Caco-2 (cell line): ENCODE measurements at regions of chr1 and their contacts with region 1.

Region 1: GRCh38 chr1:2194898-2195673 is 514 bp upstream of the FAAP20 start:
- DNase-seq: peak; percentile 87 to 91
- H3K4me3 ChIP-seq: peak overlapping the region; percentile 54
- H3K4me3 Mint-ChIP-seq: peak overlapping the region; percentile 73
- H3K27ac Mint-ChIP-seq: no peak overlapping the region
- H3K4me1 ChIP-seq: peaks cover 15% of the 10 kb centered on the region
- H3K4me1 Mint-ChIP-seq: no peaks in the 10 kb centered on the region
- H3K27me3 ChIP-seq: no peaks in the 10 kb centered on the region
- H3K27me3 Mint-ChIP-seq: no peaks in the 10 kb centered on the region
- CTCF ChIP-seq: peak; percentile 70 to 83

Region 2: GRCh38 chr1:2163205-2163604 is 31.9 kb before region 1 on chr1:
- CTCF ChIA-PET with region 1: no interaction called
- POLR2A ChIA-PET with region 1: no interaction called
- intact Hi-C with region 1: no loop called
- DNase-seq: no peak
- H3K4me3 ChIP-seq: no peak overlapping the region
- H3K4me3 Mint-ChIP-seq: no peak overlapping the region
- H3K27ac Mint-ChIP-seq: no peak overlapping the region
- H3K4me1 ChIP-seq: no peaks in the 10 kb centered on the region
- H3K4me1 Mint-ChIP-seq: no peaks in the 10 kb centered on the region
- H3K27me3 ChIP-seq: no peaks in the 10 kb centered on the region
- H3K27me3 Mint-ChIP-seq: no peaks in the 10 kb centered on the region
- CTCF ChIP-seq: no peak

Region 3: DNA sequence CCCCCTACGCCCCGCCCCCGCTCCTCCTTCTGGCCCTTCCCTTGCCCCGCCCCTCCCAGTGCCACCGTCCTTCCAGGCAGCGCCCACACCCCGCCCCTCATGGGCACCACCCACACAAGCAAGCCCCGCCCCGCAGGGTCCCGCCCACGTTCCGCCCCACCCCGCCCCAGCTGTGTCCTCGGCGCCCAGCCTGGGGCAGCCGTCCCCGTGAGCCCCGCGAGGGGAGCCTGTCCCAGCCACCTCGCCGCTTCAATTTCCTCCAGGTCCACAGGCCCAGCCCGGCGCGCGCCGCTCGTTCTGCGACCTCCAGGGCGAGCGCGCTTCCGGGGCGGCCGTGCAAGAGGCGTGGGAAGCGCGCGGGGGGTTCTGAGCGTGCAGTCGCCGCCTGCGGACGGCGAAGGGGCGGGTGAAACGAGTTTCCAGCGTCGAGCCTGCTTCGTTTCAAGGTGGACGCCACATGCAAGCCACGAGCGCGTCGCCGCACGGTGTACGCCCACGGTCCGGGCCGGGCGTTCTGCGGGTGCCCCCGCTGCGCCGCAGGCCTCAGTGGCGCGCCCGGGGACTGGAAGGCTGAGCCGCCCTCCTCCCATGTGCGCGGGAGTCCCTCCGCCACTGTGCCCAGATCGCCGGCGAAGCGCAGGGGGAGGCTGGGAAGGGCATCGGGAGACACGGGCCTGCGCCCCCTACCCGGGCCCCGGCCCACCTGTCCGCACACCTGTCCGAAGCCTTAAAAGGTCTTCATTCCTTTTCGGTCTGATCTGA is 10.3 kb after region 1 on chr1:
- CTCF ChIA-PET with region 1: interaction called, 13 read pairs
- POLR2A ChIA-PET with region 1: interaction called, 5 read pairs
- intact Hi-C with region 1: no loop called
- DNase-seq: peak; percentile 93
- H3K4me3 ChIP-seq: peak overlapping the region; percentile 53
- H3K4me3 Mint-ChIP-seq: peak overlapping the region; percentile 57
- H3K27ac Mint-ChIP-seq: no peak overlapping the region
- H3K4me1 ChIP-seq: peaks cover 6% of the 10 kb centered on the region; the same call in 1 of the 2 replicates
- H3K4me1 Mint-ChIP-seq: no peaks in the 10 kb centered on the region
- H3K27me3 ChIP-seq: no peaks in the 10 kb centered on the region
- H3K27me3 Mint-ChIP-seq: no peaks in the 10 kb centered on the region
- CTCF ChIP-seq: no peak

Region 4: GRCh38 chr1:2227346-2228153 is 32.5 kb after region 1 on chr1:
- CTCF ChIA-PET with region 1: interaction called, 12 read pairs
- POLR2A ChIA-PET with region 1: interaction called, 7 read pairs
- intact Hi-C with region 1: no loop called
- DNase-seq: peak; percentile 92 to 96
- H3K4me3 ChIP-seq: peak overlapping the region; percentile 84
- H3K4me3 Mint-ChIP-seq: peak overlapping the region; percentile 76
- H3K27ac Mint-ChIP-seq: no peak overlapping the region
- H3K4me1 ChIP-seq: no peaks in the 10 kb centered on the region
- H3K4me1 Mint-ChIP-seq: peaks cover 9% of the 10 kb centered on the region
- H3K27me3 ChIP-seq: no peaks in the 10 kb centered on the region
- H3K27me3 Mint-ChIP-seq: no peaks in the 10 kb centered on the region
- CTCF ChIP-seq: no peak

Region 5: GRCh38 chr1:2314803-2315673 is 120.0 kb after region 1 on chr1:
- CTCF ChIA-PET with region 1: interaction called, 10 read pairs
- POLR2A ChIA-PET with region 1: interaction called, 4 read pairs
- intact Hi-C with region 1: no loop called
- DNase-seq: peak; percentile 63 to 68
- H3K4me3 ChIP-seq: peak overlapping the region; percentile 51
- H3K4me3 Mint-ChIP-seq: peak overlapping the region; percentile 56
- H3K27ac Mint-ChIP-seq: peak overlapping the region; percentile 32
- H3K4me1 ChIP-seq: peaks cover 21% of the 10 kb centered on the region; the same call in 1 of the 2 replicates
- H3K4me1 Mint-ChIP-seq: no peaks in the 10 kb centered on the region
- H3K27me3 ChIP-seq: no peaks in the 10 kb centered on the region
- H3K27me3 Mint-ChIP-seq: no peaks in the 10 kb centered on the region
- CTCF ChIP-seq: peak; percentile 58 to 93

Region 6: GRCh38 chr1:2381741-2382620 is 186.9 kb after region 1 on chr1:
- CTCF ChIA-PET with region 1: interaction called, 29 read pairs
- POLR2A ChIA-PET with region 1: no interaction called
- intact Hi-C with region 1: loop called (anchors 1 kb)
- DNase-seq: peak in 1 of 2 experiments; percentile 71
- H3K4me3 ChIP-seq: no peak overlapping the region
- H3K4me3 Mint-ChIP-seq: no peak overlapping the region
- H3K27ac Mint-ChIP-seq: no peak overlapping the region
- H3K4me1 ChIP-seq: no peaks in the 10 kb centered on the region
- H3K4me1 Mint-ChIP-seq: no peaks in the 10 kb centered on the region
- H3K27me3 ChIP-seq: no peaks in the 10 kb centered on the region
- H3K27me3 Mint-ChIP-seq: no peaks in the 10 kb centered on the region
- CTCF ChIP-seq: peak; percentile 50 to 67

Region 7: DNA sequence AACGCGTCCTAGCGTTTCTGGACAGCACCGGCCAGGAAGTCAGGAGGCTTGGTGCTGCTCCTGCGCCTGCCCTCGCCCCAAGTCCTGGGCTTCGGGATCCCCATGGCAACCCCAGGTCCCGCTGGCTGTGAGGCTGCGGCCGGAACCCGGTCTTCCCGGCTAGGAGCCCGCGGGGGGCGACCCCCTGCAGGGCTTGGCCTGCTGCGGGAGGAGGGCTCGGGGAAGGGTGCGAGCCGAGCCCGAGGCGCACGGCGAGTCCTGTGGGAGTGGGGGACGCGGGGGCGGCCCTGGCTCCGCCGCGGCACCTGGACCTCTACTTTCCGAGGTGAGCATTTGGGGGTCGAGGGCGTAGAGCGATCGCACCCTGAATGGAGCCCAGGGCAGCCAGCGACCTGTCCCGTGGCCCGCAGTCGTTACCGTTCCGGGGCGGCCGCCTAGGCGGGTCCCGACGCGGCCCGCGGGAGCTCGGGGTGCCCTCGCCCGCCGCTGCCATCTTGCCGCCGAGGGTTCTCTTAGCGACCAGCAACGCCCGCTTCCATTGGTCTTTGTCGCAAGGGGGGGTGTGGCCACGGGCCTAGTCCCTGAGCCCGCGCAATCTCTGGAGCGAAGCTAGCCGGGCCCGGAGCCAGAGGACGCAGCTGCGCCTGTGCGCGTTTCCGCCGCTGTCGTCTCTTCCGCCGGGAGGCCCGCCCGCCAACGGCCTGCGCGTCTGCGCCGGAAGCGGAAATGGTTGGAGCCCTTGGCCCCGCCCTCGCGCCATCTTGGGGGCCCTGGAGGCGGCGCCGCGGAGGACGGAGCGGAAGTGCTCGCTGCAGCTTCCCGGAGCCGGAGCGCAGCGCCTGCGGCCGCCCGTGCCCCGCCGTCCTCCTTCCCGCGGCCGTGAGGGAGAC is 196.2 kb after region 1 on chr1 and contains the starts of genes MORN1 and RER1:
- CTCF ChIA-PET with region 1: interaction called, 12 read pairs
- POLR2A ChIA-PET with region 1: interaction called, 12 read pairs
- intact Hi-C with region 1: no loop called
- DNase-seq: peak; percentile 96 to 97
- H3K4me3 ChIP-seq: peak within 1 kb of the TSS; percentile 93
- H3K4me3 Mint-ChIP-seq: peak within 1 kb of the TSS; percentile 77
- H3K27ac Mint-ChIP-seq: peak within 1 kb of the TSS; percentile 79
- H3K4me1 ChIP-seq: peaks cover 11% of the 10 kb centered on the region; the same call in 1 of the 2 replicates
- H3K4me1 Mint-ChIP-seq: peaks cover 10% of the 10 kb centered on the region
- H3K27me3 ChIP-seq: no peaks in the 10 kb centered on the region
- H3K27me3 Mint-ChIP-seq: no peaks in the 10 kb centered on the region
- CTCF ChIP-seq: no peak
- total RNA-seq, gene MORN1: 8.6 and 9.1 TPM in 2 replicates
- total RNA-seq, gene RER1: 136 and 141 TPM in 2 replicates